ENCODE measurements at regions of chr3 and their contacts with region 1.

Region 1: GRCh38 chr3:100463002-100463401 is 29.4 kb upstream of the TMEM45A start:
- DNase-seq: peak; percentile 79
- H3K4me3 Mint-ChIP-seq: no peak overlapping the region
- H3K27ac Mint-ChIP-seq: no peak overlapping the region
- H3K4me1 Mint-ChIP-seq: peaks cover 9% of the 10 kb centered on the region
- H3K27me3 Mint-ChIP-seq: no peaks in the 10 kb centered on the region
- CTCF ChIP-seq: peak; percentile 88

Region 2: GRCh38 chr3:100047455-100048141 is 415.4 kb before region 1 on chr3:
- CTCF ChIA-PET with region 1: no interaction called
- POLR2A ChIA-PET with region 1: no interaction called
- intact Hi-C with region 1: no loop called
- DNase-seq: peak; percentile 74
- H3K4me3 Mint-ChIP-seq: peak overlapping the region; percentile 22
- H3K27ac Mint-ChIP-seq: peak overlapping the region; percentile 85
- H3K4me1 Mint-ChIP-seq: peaks cover 44% of the 10 kb centered on the region
- H3K27me3 Mint-ChIP-seq: no peaks in the 10 kb centered on the region
- CTCF ChIP-seq: no peak

Region 3: DNA sequence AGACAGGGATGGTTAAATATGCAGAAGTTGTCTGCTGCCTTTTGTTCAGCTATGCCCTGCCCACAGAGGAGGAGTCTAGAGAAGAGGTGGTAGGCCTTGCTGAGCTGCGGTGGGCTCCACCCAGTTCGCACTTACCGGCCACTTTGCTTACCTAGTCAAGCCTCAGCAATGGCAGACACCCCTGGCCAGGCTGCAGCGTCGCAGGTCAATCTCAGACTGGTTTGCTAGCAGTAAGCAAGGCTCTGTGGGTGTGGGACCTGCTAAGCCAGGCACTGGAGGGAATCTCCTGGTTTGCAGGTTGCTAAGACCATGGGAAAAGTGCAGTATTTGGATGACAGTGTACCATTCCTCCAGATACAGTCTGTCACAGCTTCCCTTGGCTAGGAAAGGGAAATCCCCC is 17.1 kb after region 1 on chr3:
- CTCF ChIA-PET with region 1: interaction called, 12 read pairs
- POLR2A ChIA-PET with region 1: interaction called, 6 read pairs
- intact Hi-C with region 1: no loop called
- DNase-seq: no peak
- H3K4me3 Mint-ChIP-seq: no peak overlapping the region
- H3K27ac Mint-ChIP-seq: no peak overlapping the region
- H3K4me1 Mint-ChIP-seq: no peaks in the 10 kb centered on the region
- H3K27me3 Mint-ChIP-seq: peaks cover 28% of the 10 kb centered on the region
- CTCF ChIP-seq: no peak

Region 4: DNA sequence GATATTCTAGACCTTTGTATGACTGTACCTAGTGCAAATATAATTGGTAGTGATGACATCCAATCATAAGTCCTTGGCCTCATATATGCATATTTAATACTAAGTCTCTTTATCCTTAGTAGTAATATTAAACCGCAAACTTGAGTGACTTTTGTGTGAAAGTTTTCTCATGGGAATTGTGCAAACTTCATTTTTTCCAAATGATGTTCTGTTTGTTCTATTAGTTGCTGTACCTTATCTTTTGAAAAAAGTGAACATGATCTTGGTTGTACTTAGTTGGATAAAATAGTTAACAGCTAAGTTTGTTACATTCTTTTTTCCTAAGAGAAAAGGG is 72.6 kb after region 1 on chr3:
- CTCF ChIA-PET with region 1: interaction called, 12 read pairs
- POLR2A ChIA-PET with region 1: no interaction called
- intact Hi-C with region 1: no loop called
- DNase-seq: no peak
- H3K4me3 Mint-ChIP-seq: no peak overlapping the region
- H3K27ac Mint-ChIP-seq: no peak overlapping the region
- H3K4me1 Mint-ChIP-seq: peaks cover 39% of the 10 kb centered on the region
- H3K27me3 Mint-ChIP-seq: no peaks in the 10 kb centered on the region
- CTCF ChIP-seq: no peak

Region 5: DNA sequence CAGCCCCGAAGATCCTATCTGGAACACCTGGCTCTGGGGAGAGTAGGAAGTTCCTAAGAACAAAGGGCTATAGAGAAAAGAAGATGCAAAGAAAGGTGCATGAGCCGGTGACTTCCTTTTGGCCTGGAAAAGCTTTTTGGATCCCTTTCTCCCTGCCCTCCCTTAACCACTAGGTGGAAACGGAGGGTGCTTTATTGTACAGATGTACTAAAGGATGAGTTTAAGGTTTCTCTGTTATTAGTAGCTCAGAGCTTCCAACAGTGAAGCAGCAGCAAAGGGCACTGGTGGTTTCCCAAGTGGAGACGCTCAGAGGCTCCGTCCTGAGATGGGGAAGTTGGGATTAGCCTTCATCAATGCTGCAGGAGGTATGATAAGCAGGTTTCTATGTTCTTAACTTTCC is 140.5 kb after region 1 on chr3:
- CTCF ChIA-PET with region 1: interaction called, 48 read pairs
- POLR2A ChIA-PET with region 1: interaction called, 10 read pairs
- intact Hi-C with region 1: no loop called
- DNase-seq: peak; percentile 67
- H3K4me3 Mint-ChIP-seq: no peak overlapping the region
- H3K27ac Mint-ChIP-seq: peak overlapping the region; percentile 49
- H3K4me1 Mint-ChIP-seq: peaks cover 36% of the 10 kb centered on the region
- H3K27me3 Mint-ChIP-seq: no peaks in the 10 kb centered on the region
- CTCF ChIP-seq: peak; percentile 36

Region 6: DNA sequence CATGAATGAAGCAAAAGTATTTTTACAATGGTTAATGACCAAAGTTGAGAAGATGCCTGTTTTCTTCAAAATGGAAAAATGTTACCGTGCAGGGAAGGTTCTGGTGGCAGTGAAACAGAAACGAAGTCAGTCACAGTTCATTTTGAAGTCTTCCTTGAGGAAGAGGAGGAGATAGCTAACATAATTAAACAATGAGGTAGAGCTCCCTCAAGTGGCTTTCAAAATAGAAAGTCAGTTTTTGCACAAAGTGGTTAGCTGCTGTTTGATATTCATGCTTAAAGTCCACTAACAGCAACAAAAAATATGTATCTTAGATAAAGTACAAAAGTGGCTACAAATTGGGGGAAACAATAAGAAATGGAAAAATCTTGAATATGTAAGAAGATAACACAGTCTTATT is 333.6 kb after region 1 on chr3:
- CTCF ChIA-PET with region 1: interaction called, 3 read pairs
- POLR2A ChIA-PET with region 1: interaction called, 3 read pairs
- intact Hi-C with region 1: loop called (anchors 1 kb)
- DNase-seq: peak; percentile 45
- H3K4me3 Mint-ChIP-seq: no peak overlapping the region
- H3K27ac Mint-ChIP-seq: no peak overlapping the region
- H3K4me1 Mint-ChIP-seq: peaks cover 7% of the 10 kb centered on the region
- H3K27me3 Mint-ChIP-seq: no peaks in the 10 kb centered on the region
- CTCF ChIP-seq: peak; percentile 28

Measured in MCF 10A (cell line).